Naive thymus-derived CD4-positive, alpha-beta T cell (primary cell): ENCODE measurements at regions of chr3 and their contacts with region 1.

Region 1: GRCh38 chr3:112973325-112974177 is 1.4 kb downstream of the CD200R1 start:
- DNase-seq: peak in 8 of 9 donors; percentile 31 to 64 (median 52)
- ATAC-seq: peak; percentile 87
- H3K4me3 ChIP-seq: peak overlapping the region; percentile 72
- H3K4me3 Mint-ChIP-seq: peak overlapping the region; percentile 83 to 98 (median 94)
- H3K27ac ChIP-seq: peak overlapping the region; percentile 80
- H3K27ac Mint-ChIP-seq: peak overlapping the region; percentile 86 to 97 (median 95)
- H3K4me1 ChIP-seq: peaks cover 28 to 43% of the 10 kb centered on the region in 2 donors
- H3K4me1 Mint-ChIP-seq: peaks cover 56 to 88% (median 74%) of the 10 kb centered on the region in 7 donors
- H3K27me3 ChIP-seq: no peaks in the 10 kb centered on the region
- H3K27me3 Mint-ChIP-seq: no peaks in the 10 kb centered on the region

Region 2: DNA sequence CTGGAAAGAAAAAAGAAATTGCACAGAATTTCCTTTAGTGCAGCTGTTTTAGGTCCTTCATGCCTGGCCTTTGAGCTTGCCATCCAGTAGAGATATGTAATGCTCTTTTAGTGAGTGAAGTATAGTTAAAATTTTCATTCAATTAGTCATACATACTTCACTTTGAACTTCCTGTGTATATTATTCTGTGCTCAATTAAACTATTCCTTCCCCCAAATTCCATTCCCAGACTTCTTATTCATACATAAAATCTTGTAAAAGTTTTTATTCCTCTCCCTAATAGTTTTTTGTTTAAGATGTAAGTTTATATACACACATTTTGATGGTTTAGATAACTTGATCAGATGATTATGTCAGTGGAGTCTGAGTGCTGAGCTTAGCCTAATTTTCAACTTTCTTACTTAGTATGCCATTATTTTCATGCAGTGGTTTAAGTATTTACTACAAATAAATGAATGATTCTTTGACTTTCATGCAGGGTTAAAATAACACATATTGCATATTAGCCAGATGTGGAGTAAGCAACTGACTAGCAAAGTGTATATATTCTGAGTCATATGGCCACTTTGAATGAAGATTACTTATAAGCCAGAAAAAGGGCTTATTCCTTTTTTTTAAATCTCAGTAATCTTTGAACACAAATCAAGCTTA is 1037.2 kb before region 1 on chr3:
- CTCF ChIA-PET with region 1: no interaction called
- POLR2A ChIA-PET with region 1: no interaction called
- intact Hi-C with region 1: no loop called
- DNase-seq: no peak
- ATAC-seq: no peak
- H3K4me3 ChIP-seq: no peak overlapping the region
- H3K4me3 Mint-ChIP-seq: no peak overlapping the region
- H3K27ac ChIP-seq: no peak overlapping the region
- H3K27ac Mint-ChIP-seq: no peak overlapping the region
- H3K4me1 ChIP-seq: no peaks in the 10 kb centered on the region
- H3K4me1 Mint-ChIP-seq: no peaks in the 10 kb centered on the region
- H3K27me3 ChIP-seq: no peaks in the 10 kb centered on the region
- H3K27me3 Mint-ChIP-seq: peaks cover 0 to 9% (median 0%) of the 10 kb centered on the region in 5 donors

Region 3: DNA sequence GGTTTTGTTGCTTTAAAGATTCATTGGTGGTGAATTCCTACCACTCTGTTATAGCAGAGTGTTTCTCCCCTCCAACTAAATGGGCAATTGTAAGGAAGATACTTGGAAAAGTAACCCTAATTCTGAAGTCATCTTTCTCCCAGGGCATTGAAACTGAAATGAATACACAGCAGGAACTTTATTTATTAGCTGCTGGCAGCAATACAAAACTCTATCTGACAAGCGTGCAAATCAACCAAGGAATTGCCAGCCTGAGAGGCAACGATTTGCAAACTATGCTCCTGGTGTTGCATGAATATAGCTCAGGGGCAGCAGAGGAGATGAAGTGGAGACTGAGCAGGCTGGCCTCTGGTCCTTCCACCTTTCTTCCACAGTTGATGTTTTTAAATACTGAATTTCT is 47.6 kb before region 1 on chr3:
- CTCF ChIA-PET with region 1: interaction called, 3 read pairs
- POLR2A ChIA-PET with region 1: no interaction called
- intact Hi-C with region 1: loop called in 1 of 2 experiments (anchors 2 kb)
- DNase-seq: no peak
- ATAC-seq: no peak
- H3K4me3 ChIP-seq: no peak overlapping the region
- H3K4me3 Mint-ChIP-seq: no peak overlapping the region
- H3K27ac ChIP-seq: no peak overlapping the region
- H3K27ac Mint-ChIP-seq: peak overlapping the region in 5 of 9 donors; percentile 20 to 79 (median 68)
- H3K4me1 ChIP-seq: no peaks in the 10 kb centered on the region
- H3K4me1 Mint-ChIP-seq: peaks cover 0 to 35% (median 14%) of the 10 kb centered on the region in 7 donors
- H3K27me3 ChIP-seq: no peaks in the 10 kb centered on the region
- H3K27me3 Mint-ChIP-seq: no peaks in the 10 kb centered on the region

Region 4: GRCh38 chr3:112931736-112932521 is 41.6 kb before region 1 on chr3:
- CTCF ChIA-PET with region 1: no interaction called
- POLR2A ChIA-PET with region 1: no interaction called
- intact Hi-C with region 1: loop called in 1 of 2 experiments (anchors 2 kb)
- DNase-seq: no peak
- ATAC-seq: no peak
- H3K4me3 ChIP-seq: no peak overlapping the region
- H3K4me3 Mint-ChIP-seq: peak overlapping the region in 4 of 10 donors; percentile 19 to 37 (median 35)
- H3K27ac ChIP-seq: no peak overlapping the region
- H3K27ac Mint-ChIP-seq: peak overlapping the region in 7 of 9 donors; percentile 38 to 81 (median 76)
- H3K4me1 ChIP-seq: peaks cover 6 to 12% of the 10 kb centered on the region in 2 donors
- H3K4me1 Mint-ChIP-seq: peaks cover 8 to 74% (median 40%) of the 10 kb centered on the region in 7 donors
- H3K27me3 ChIP-seq: no peaks in the 10 kb centered on the region
- H3K27me3 Mint-ChIP-seq: no peaks in the 10 kb centered on the region

Region 5: DNA sequence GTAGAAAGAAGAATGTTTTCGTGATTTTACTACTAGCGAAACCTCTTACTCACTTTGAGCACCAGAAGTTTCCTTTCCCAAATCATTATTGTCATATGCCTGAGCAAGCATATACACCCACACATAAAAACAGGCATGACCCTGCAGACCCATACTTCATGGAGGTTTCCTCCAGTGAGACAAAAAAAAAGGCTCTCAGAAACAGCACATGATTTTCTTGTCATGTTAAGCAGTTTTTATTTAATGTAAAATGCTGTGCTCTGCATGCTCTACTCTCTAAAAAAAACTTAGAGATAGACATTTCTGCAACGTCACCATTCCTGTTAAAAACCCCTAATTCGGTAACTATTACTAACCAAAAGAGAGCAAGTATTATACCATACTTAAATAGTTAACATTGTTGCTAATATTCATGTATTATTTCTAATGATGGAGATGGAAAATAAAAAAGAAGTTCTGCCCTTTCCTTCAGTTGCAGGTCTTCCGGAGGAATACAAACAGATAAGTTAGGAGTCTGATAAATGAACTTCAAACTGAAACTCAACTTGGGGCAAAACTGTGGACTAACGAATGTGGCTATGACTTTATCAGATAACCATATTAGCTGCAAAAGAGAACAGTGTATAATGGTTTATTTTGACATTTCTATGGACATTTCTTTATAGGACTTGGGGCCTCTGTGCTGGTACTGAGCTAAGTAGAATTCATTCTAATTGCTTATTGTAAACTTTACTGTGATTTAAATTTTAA is 14.6 kb before region 1 on chr3:
- CTCF ChIA-PET with region 1: interaction called, 4 read pairs
- POLR2A ChIA-PET with region 1: interaction called, 3 read pairs
- intact Hi-C with region 1: loop called (anchors 1 to 2 kb)
- DNase-seq: no peak
- ATAC-seq: peak; percentile 36
- H3K4me3 ChIP-seq: peak overlapping the region; percentile 26
- H3K4me3 Mint-ChIP-seq: peak overlapping the region in 9 of 10 donors; percentile 32 to 81 (median 72)
- H3K27ac ChIP-seq: no peak overlapping the region
- H3K27ac Mint-ChIP-seq: peak overlapping the region in 2 of 9 donors; percentile 12 to 19
- H3K4me1 ChIP-seq: peaks cover 7 to 10% of the 10 kb centered on the region in 2 donors
- H3K4me1 Mint-ChIP-seq: peaks cover 16 to 68% (median 53%) of the 10 kb centered on the region in 7 donors
- H3K27me3 ChIP-seq: no peaks in the 10 kb centered on the region
- H3K27me3 Mint-ChIP-seq: no peaks in the 10 kb centered on the region

Region 6: GRCh38 chr3:112984485-112984884 is 10.9 kb after region 1 on chr3:
- CTCF ChIA-PET with region 1: interaction called, 14 read pairs
- POLR2A ChIA-PET with region 1: interaction called, 14 read pairs
- intact Hi-C with region 1: no loop called
- DNase-seq: peak in 4 of 9 donors; percentile 39 to 75 (median 44)
- ATAC-seq: no peak
- H3K4me3 ChIP-seq: no peak overlapping the region
- H3K4me3 Mint-ChIP-seq: peak overlapping the region in 4 of 10 donors; percentile 6 to 44 (median 31)
- H3K27ac ChIP-seq: no peak overlapping the region
- H3K27ac Mint-ChIP-seq: peak overlapping the region in 7 of 9 donors; percentile 40 to 78 (median 63)
- H3K4me1 ChIP-seq: peaks cover 14 to 40% of the 10 kb centered on the region in 2 donors
- H3K4me1 Mint-ChIP-seq: peaks cover 19 to 66% (median 61%) of the 10 kb centered on the region in 7 donors
- H3K27me3 ChIP-seq: no peaks in the 10 kb centered on the region
- H3K27me3 Mint-ChIP-seq: peaks cover 0 to 3% (median 0%) of the 10 kb centered on the region in 5 donors

Region 7: GRCh38 chr3:113002679-113003078 is 29.1 kb after region 1 on chr3:
- CTCF ChIA-PET with region 1: interaction called, 12 read pairs
- POLR2A ChIA-PET with region 1: interaction called, 9 read pairs
- intact Hi-C with region 1: loop called in 1 of 2 experiments (anchors 1 kb)
- DNase-seq: peak in 7 of 9 donors; percentile 27 to 53 (median 41)
- ATAC-seq: peak; percentile 50
- H3K4me3 ChIP-seq: no peak overlapping the region
- H3K4me3 Mint-ChIP-seq: peak overlapping the region in 8 of 10 donors; percentile 19 to 70 (median 48)
- H3K27ac ChIP-seq: peak overlapping the region; percentile 78
- H3K27ac Mint-ChIP-seq: peak overlapping the region; percentile 74 to 98 (median 89)
- H3K4me1 ChIP-seq: peaks cover 22 to 61% of the 10 kb centered on the region in 2 donors
- H3K4me1 Mint-ChIP-seq: peaks cover 33 to 99% (median 91%) of the 10 kb centered on the region in 7 donors
- H3K27me3 ChIP-seq: no peaks in the 10 kb centered on the region
- H3K27me3 Mint-ChIP-seq: no peaks in the 10 kb centered on the region

Region 8: DNA sequence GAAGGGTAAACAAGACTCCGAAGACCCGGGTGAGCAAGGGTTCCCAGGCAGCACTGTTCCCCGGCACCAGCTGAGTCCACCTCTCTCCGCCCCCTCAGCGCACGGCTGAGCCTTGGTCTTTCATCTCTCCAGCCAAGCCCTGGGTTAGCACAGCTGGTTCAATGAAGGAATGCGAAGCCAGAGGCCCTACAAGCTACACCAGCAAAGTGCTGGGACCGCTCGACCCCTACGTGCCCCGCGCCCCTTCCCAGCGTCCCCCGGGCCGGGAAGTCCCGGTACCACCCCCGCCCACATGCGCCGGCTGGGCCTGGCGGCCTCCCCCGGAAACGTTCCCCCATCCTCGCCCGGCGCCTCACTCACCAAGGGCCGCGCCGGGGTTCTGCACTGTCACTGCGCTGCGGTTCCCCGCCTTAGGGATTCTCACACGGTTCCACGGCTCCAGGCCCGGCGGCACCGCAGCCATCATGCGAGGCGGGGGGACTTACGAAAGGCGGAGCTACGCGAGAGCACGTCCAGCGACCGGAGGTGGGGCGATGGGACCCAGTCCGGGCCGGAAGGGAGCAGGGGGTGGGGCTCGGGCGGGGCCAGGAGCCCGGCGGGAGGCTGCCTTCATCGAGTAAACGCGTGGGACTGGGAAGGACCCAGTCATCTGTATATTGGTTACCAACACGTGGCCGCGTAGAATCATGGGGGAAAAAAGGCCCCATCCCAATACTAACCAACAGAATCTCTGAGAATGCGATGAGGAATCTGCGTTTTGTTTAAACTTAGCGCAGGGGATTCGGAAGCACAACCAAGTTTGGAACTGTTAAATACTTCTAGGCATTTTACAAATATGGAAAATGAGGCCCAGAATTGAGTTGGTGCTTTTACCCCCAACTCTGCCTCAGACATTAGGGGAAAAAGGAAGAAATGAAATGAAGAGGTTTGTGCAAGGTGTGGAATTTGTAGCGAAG is 45.9 kb after region 1 on chr3:
- CTCF ChIA-PET with region 1: interaction called, 3 read pairs
- POLR2A ChIA-PET with region 1: interaction called, 6 read pairs
- intact Hi-C with region 1: loop called in 1 of 2 experiments (anchors 1 kb)
- DNase-seq: peak; percentile 69 to 89 (median 74)
- ATAC-seq: peak; percentile 92
- H3K4me3 ChIP-seq: peak overlapping the region; percentile 81
- H3K4me3 Mint-ChIP-seq: peak overlapping the region; percentile 87 to 97 (median 92)
- H3K27ac ChIP-seq: peak overlapping the region; percentile 96
- H3K27ac Mint-ChIP-seq: peak overlapping the region; percentile 87 to 96 (median 91)
- H3K4me1 ChIP-seq: peaks cover 19 to 21% of the 10 kb centered on the region in 2 donors
- H3K4me1 Mint-ChIP-seq: peaks cover 44 to 87% (median 71%) of the 10 kb centered on the region in 7 donors
- H3K27me3 ChIP-seq: no peaks in the 10 kb centered on the region
- H3K27me3 Mint-ChIP-seq: no peaks in the 10 kb centered on the region

Region 9: GRCh38 chr3:113736548-113737089 is 763.1 kb after region 1 on chr3:
- CTCF ChIA-PET with region 1: no interaction called
- POLR2A ChIA-PET with region 1: no interaction called
- intact Hi-C with region 1: no loop called
- DNase-seq: peak in 7 of 9 donors; percentile 49 to 71 (median 67)
- ATAC-seq: peak; percentile 93
- H3K4me3 ChIP-seq: no peak overlapping the region
- H3K4me3 Mint-ChIP-seq: no peak overlapping the region
- H3K27ac ChIP-seq: peak overlapping the region; percentile 17
- H3K27ac Mint-ChIP-seq: peak overlapping the region; percentile 18 to 85 (median 60)
- H3K4me1 ChIP-seq: peaks cover 6 to 23% of the 10 kb centered on the region in 2 donors
- H3K4me1 Mint-ChIP-seq: peaks cover 13 to 70% (median 56%) of the 10 kb centered on the region in 7 donors
- H3K27me3 ChIP-seq: no peaks in the 10 kb centered on the region
- H3K27me3 Mint-ChIP-seq: no peaks in the 10 kb centered on the region